ENCODE measurements at regions of chr1 and their contacts with region 1.

Region 1: DNA sequence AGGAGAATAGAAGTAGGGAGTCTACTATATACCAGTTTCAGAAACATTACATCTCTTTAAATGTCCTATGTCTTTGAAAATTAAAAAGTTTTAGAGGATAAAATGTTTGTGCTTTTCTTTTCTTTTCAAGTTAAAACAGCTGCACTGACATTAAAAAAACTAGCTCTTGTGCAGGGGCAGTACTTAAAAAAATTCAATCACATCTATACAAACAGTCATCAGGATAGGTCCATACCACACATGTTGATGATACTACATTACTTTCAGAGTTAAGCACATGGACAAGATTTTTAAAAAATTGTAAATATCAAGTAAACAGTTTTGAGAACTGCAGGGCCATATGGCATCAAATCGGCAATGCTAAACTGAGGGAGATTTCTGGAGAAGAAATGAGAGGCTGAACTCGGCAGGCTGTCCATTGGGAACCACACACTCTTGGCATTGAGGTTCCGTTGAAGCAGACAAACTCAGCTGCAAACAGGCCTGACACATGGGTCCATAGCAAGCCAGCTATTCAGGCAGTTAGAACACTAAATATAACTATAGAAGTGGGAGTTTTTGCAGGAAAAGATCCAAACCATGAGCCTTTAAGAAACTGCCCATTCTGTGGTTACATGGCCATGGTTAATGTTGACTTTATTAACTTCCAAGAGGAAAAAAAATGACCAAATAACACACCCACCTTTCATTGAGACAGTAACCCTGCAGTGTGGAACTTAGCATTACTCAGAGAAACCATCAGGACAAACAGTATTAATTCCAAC is 84.5 kb upstream of the BCL10 start:
- DNase-seq: peak; percentile 17
- H3K4me3 Mint-ChIP-seq: peak overlapping the region; percentile 32
- H3K27ac Mint-ChIP-seq: peak overlapping the region; percentile 26
- H3K4me1 Mint-ChIP-seq: peaks cover 70% of the 10 kb centered on the region
- H3K27me3 Mint-ChIP-seq: no peaks in the 10 kb centered on the region
- CTCF ChIP-seq: no peak

Region 2: GRCh38 chr1:85374160-85374559 is 13.2 kb after region 1 on chr1:
- CTCF ChIA-PET with region 1: interaction called, 12 read pairs
- intact Hi-C with region 1: no loop called
- DNase-seq: peak; percentile 36
- H3K4me3 Mint-ChIP-seq: peak overlapping the region; percentile 18
- H3K27ac Mint-ChIP-seq: peak overlapping the region; percentile 77
- H3K4me1 Mint-ChIP-seq: peaks cover 57% of the 10 kb centered on the region
- H3K27me3 Mint-ChIP-seq: no peaks in the 10 kb centered on the region
- CTCF ChIP-seq: no peak

Region 3: GRCh38 chr1:85398391-85399064 is 37.6 kb after region 1 on chr1:
- CTCF ChIA-PET with region 1: no interaction called
- intact Hi-C with region 1: loop called (anchors 5 kb)
- DNase-seq: no peak
- H3K4me3 Mint-ChIP-seq: no peak overlapping the region
- H3K27ac Mint-ChIP-seq: no peak overlapping the region
- H3K4me1 Mint-ChIP-seq: peaks cover 36% of the 10 kb centered on the region
- H3K27me3 Mint-ChIP-seq: no peaks in the 10 kb centered on the region
- CTCF ChIP-seq: no peak